K562 (cell line): ENCODE measurements at regions of chr15 and their contacts with region 1.

Region 1: GRCh38 chr15:28969511-28970085 is 83.8 kb downstream of the APBA2 start:
- DNase-seq: peak in 1 of 4 experiments; percentile 16
- ATAC-seq: peak; percentile 47; the same call in 2 of the 3 replicates
- H3K4me3 ChIP-seq: no peak overlapping the region
- H3K27ac ChIP-seq: peak overlapping the region; percentile 64; the same call in 2 of the 3 replicates
- H3K4me1 ChIP-seq: peaks cover 20 to 29% of the 10 kb centered on the region in 2 experiments
- H3K27me3 ChIP-seq: no peaks in the 10 kb centered on the region
- CTCF ChIP-seq: no peak
- EP300 ChIP-seq: no peak
- POLR2A ChIP-seq: no peak
- RAD21 ChIP-seq: no peak

Region 2: GRCh38 chr15:28929200-28929599 is 40.4 kb before region 1 on chr15:
- CTCF ChIA-PET with region 1: no interaction called
- POLR2A ChIA-PET with region 1: no interaction called
- in situ Hi-C with region 1: no loop called
- intact Hi-C with region 1: loop called (anchors 5 kb)
- DNase-seq: no peak
- ATAC-seq: no peak
- H3K4me3 ChIP-seq: no peak overlapping the region
- H3K27ac ChIP-seq: no peak overlapping the region
- H3K4me1 ChIP-seq: peaks cover 15 to 27% of the 10 kb centered on the region in 2 experiments
- H3K27me3 ChIP-seq: no peaks in the 10 kb centered on the region
- CTCF ChIP-seq: no peak
- EP300 ChIP-seq: no peak
- POLR2A ChIP-seq: no peak
- RAD21 ChIP-seq: no peak

Region 3: GRCh38 chr15:28986108-28986507 is 16.5 kb after region 1 on chr15:
- CTCF ChIA-PET with region 1: no interaction called
- POLR2A ChIA-PET with region 1: no interaction called
- in situ Hi-C with region 1: no loop called
- intact Hi-C with region 1: no loop called
- DNase-seq: no peak
- ATAC-seq: no peak
- H3K4me3 ChIP-seq: no peak overlapping the region
- H3K27ac ChIP-seq: no peak overlapping the region
- H3K4me1 ChIP-seq: peaks cover 16 to 26% of the 10 kb centered on the region in 2 experiments; a peak in 4 of 5 replicates
- H3K27me3 ChIP-seq: no peaks in the 10 kb centered on the region
- CTCF ChIP-seq: no peak
- EP300 ChIP-seq: no peak
- POLR2A ChIP-seq: no peak
- RAD21 ChIP-seq: no peak

Region 4: DNA sequence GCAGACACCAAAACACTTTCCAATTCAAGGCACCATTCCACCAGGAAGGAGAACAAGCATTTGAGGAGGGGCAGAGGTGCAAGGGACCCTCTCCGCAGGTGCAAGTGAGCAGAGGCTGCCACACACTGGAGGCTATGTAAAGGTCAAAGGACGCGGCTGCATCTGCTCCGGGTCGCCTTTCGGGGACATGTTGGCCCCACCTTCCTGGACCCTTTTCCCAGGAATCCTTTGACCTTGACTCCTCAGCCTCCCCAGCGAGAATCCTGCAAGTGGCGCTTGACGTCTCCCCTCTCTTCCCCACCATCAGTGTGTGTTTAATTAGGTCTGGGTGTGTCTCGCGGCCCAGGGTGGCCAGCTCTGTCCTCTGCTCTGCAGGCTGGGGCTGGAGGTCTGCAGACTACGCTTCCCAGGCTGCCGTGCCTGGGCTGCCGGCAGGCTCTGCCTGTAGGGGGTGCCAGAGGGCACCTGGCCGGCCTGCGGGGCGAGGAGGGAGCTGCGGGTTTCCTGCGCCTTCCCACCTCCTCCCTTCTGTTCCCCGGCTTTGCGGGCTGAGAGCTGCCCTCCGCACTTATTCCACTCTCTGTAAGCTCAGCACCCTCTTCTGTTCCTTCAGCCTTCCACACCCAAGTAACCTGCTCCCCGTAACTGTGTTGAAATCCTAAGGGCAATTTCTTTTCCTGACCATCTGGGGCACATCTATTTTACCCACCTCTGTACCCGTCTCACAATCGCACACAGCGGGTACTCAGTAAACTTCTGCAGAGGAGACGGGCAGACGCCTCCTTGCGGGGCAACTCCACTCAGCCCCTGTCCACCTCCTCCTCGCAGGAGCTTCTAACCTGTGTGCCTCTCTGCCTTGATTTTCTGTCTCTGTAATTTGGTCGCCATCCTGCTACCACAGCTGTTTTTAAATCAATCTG is 170.2 kb after region 1 on chr15:
- CTCF ChIA-PET with region 1: no interaction called
- POLR2A ChIA-PET with region 1: no interaction called
- in situ Hi-C with region 1: no loop called
- intact Hi-C with region 1: no loop called
- DNase-seq: peak; percentile 72 to 87 (median 86)
- ATAC-seq: peak; percentile 98
- H3K4me3 ChIP-seq: no peak overlapping the region
- H3K27ac ChIP-seq: no peak overlapping the region
- H3K4me1 ChIP-seq: peaks cover 0 to 11% of the 10 kb centered on the region in 2 experiments; a peak in 2 of 5 replicates
- H3K27me3 ChIP-seq: peaks cover 66 to 80% of the 10 kb centered on the region in 2 experiments
- CTCF ChIP-seq: peak; percentile 85 to 91 (median 90)
- EP300 ChIP-seq: no peak
- POLR2A ChIP-seq: no peak
- RAD21 ChIP-seq: peak; percentile 14 to 71; a peak in 3 of 4 replicates